ENCODE measurements at regions of chr11 and their contacts with region 1.

Region 1: DNA sequence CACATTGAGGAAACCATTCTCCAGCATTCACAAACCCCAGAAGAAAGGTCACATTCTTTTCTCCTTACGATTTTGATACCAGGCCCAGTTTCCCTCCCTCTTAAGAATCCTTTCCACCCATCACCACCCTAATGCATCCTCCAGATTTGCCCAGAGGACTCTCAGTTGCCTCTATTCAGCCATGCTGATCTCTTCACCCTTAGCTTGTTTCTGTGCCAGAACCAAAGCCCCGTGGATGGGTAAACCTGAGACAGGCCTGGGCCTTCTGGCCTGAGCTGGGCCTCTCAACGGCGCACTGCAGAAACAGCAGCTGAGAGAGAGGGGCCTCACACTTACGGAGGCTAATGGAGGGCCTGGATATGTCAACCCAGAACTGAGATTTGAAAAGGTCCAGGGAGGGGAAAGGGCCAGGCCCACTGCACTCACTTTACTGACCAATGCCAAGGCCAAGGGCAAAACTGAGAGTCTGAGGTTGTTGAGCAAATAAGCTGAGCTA is 32.2 kb upstream of the OAF start:
- DNase-seq: no peak
- H3K4me3 ChIP-seq: no peak overlapping the region
- H3K4me3 Mint-ChIP-seq: no peak overlapping the region
- H3K27ac ChIP-seq: no peak overlapping the region
- H3K27ac Mint-ChIP-seq: no peak overlapping the region
- H3K4me1 ChIP-seq: no peaks in the 10 kb centered on the region
- H3K4me1 Mint-ChIP-seq: no peaks in the 10 kb centered on the region
- H3K27me3 ChIP-seq: no peaks in the 10 kb centered on the region
- H3K27me3 Mint-ChIP-seq: peaks cover 10 to 18% of the 10 kb centered on the region in 2 donors

Region 2: DNA sequence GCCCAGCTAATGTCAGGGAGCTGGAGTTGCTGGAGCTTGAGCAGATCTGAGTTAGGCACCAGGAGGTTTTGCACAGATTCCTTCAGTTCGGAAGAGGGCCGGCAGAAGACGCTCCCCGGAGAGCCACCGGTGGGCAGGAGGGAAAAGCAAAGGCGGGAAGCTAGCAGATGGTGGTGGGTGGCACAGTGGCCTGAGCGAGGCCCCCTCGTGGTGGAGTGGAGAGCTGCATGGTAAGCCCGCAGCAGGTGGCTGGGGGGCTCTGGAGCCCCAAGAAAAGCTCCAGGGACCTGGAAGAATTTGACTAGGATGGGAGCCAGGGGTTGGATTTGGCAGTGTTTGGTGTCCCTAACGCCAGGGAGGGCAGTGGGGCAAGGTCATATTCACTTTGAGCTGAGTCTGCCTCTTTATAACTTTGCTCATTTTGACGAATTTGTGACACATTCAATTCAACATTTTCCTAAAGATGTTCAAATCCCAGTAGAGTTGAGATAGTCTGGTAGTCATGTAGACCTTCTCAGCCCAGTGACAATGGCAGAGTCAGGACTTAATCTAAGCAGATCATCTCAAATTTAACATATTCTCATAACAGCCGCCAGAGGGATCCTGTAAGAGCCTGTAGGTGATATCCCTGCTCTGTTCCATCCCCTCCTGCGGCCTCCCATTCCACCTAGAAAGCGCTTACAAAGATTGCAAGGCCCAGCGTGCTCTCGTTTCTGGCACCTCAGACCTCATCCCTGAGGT is 98.7 kb before region 1 on chr11:
- CTCF ChIA-PET with region 1: no interaction called
- POLR2A ChIA-PET with region 1: no interaction called
- intact Hi-C with region 1: no loop called
- DNase-seq: peak in 2 of 5 donors; percentile 5 to 10
- H3K4me3 ChIP-seq: no peak overlapping the region
- H3K4me3 Mint-ChIP-seq: peak overlapping the region in 1 of 8 donors; percentile 20
- H3K27ac ChIP-seq: no peak overlapping the region
- H3K27ac Mint-ChIP-seq: no peak overlapping the region
- H3K4me1 ChIP-seq: no peaks in the 10 kb centered on the region
- H3K4me1 Mint-ChIP-seq: peaks cover 0 to 7% (median 0%) of the 10 kb centered on the region in 4 donors
- H3K27me3 ChIP-seq: no peaks in the 10 kb centered on the region
- H3K27me3 Mint-ChIP-seq: peaks cover 8 to 17% of the 10 kb centered on the region in 2 donors

Region 3: GRCh38 chr11:120229451-120230424 is 51.1 kb after region 1 on chr11:
- CTCF ChIA-PET with region 1: interaction called, 12 read pairs
- POLR2A ChIA-PET with region 1: no interaction called
- intact Hi-C with region 1: no loop called
- DNase-seq: no peak
- H3K4me3 ChIP-seq: no peak overlapping the region
- H3K4me3 Mint-ChIP-seq: no peak overlapping the region
- H3K27ac ChIP-seq: no peak overlapping the region
- H3K27ac Mint-ChIP-seq: no peak overlapping the region
- H3K4me1 ChIP-seq: no peaks in the 10 kb centered on the region
- H3K4me1 Mint-ChIP-seq: no peaks in the 10 kb centered on the region
- H3K27me3 ChIP-seq: no peaks in the 10 kb centered on the region
- H3K27me3 Mint-ChIP-seq: peaks cover 10 to 22% of the 10 kb centered on the region in 2 donors